ENCODE measurements at regions of chr2 and their contacts with region 1.

Region 1: DNA sequence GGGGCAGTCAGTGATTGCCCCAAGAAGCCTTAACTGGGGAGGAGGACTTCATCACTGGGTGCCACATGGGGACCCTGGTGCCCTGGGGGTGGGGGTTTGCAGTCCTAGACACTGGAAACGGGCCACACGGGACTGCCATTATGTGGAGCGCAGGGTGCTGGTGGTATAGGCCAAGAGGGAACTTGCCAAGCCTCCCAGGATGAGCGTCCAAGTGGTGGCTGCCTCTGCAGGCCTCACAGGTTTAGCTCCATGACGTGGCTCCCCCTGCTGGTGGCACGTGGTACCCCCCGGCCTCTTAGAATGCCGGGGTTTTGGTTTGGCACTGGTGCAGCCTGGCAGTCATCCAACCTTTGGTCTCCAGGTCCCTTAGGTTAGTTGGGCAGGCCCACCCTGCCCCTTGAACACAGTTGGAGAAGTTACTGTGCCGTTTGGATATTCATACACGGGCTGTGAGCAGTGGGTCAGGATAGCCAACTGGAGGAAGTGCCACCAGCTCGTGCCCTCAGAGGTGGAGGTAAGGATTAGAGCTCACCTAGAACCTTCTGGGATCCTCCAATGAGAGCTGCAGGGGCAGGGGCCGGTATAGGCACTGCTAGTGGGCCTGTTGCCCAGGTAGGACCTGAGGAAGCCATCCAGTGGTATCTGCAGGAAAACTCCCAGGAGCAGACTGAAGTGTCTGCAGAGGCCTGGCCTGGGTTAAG is 5.6 kb downstream of the PTMA start:
- H3K4me3 ChIP-seq: no peak overlapping the region
- H3K27ac ChIP-seq: peak overlapping the region; percentile 32
- H3K4me1 ChIP-seq: peaks cover 10% of the 10 kb centered on the region
- CTCF ChIP-seq: peak; percentile 98

Region 2: GRCh38 chr2:231612179-231613053 is 101.5 kb before region 1 on chr2:
- CTCF ChIA-PET with region 1: interaction called, 102 read pairs
- POLR2A ChIA-PET with region 1: interaction called, 6 read pairs
- H3K4me3 ChIP-seq: no peak overlapping the region
- H3K27ac ChIP-seq: no peak overlapping the region
- H3K4me1 ChIP-seq: no peaks in the 10 kb centered on the region; the same call in 1 of the 2 replicates
- CTCF ChIP-seq: peak; percentile 93

Region 3: DNA sequence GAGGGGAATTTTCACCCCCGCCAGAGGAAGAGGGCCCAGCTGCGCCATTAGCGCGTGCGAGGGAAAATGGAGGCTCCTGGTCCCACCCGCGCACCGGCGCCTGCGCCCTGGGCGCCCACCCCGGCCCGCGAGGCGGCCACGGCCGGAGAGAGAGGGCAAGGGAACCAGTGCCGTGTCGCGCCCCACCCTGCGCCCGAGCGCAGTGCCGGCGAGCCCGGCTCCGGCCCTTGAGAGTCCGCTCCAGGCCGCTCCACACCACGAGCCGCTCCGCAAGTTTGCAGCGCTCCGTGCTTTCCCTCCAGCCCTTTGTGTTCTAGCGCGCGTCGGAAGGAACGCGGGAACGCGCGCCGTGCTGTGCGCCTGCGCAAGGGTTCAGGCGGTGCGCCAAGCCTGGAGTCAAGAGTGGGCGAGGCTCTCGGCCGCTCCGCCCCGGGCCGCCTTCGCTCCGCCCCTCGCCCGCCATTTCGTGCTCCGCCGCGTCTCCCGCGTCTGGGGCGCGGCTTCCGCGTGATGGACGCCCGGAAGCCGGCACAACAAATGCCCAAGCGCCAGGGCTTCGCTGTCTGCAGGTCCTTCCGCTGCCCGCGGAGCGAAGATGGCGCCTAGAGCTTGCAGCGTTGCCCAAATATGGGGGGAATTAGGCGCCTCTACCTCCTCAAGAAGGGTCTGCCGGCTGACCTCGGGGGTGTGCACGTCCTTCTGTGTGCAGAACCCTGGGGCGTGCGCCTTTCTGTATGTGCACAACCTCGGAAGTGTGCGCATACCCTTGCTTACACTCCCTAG is 51.7 kb before region 1 on chr2:
- CTCF ChIA-PET with region 1: interaction called, 11 read pairs
- POLR2A ChIA-PET with region 1: interaction called, 31 read pairs
- H3K4me3 ChIP-seq: no peak overlapping the region
- H3K27ac ChIP-seq: peak overlapping the region; percentile 13; the same call in 1 of the 2 replicates
- H3K4me1 ChIP-seq: 0 out of 2 replicates have a peak, but pooled peaks cover 3% of the 10 kb centered on the region
- CTCF ChIP-seq: no peak

Region 4: DNA sequence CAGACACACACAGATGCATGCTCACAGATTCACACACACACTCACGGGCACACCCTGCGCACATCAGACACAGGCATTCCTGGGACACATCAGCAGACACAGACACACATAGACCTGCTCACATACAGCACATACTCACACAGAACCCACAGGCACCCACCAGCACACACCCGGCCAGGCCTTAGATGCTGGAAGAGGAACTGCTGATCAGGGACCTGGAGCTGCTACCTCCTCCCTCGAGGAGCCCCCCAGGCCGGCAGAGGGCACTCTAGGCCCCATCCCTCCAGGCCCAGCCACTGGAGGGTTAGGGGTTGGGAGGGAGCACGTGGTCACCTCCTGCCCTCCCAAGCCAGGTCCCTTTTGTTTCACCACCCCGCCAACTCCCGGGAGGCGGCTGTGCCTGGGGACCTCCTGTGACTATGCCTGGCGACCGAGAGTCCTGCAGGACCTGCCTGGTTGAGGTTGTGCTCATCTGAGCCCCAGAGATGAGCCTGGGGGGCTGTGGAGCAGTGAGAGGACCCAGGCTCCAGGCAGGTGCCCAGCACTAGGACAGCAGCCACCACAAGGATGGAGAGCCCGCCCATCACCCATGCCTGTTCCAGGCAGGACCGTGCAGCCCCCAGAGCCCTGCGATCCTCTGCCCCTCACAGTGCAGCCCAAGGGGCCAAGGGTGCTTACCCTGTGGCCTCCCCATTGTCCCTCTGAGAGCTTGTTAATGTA is 26.6 kb before region 1 on chr2:
- CTCF ChIA-PET with region 1: interaction called, 85 read pairs
- POLR2A ChIA-PET with region 1: interaction called, 41 read pairs
- H3K4me3 ChIP-seq: no peak overlapping the region
- H3K27ac ChIP-seq: peak overlapping the region; percentile 2; the same call in 1 of the 2 replicates
- H3K4me1 ChIP-seq: no peaks in the 10 kb centered on the region
- CTCF ChIP-seq: peak; percentile 95

Region 5: DNA sequence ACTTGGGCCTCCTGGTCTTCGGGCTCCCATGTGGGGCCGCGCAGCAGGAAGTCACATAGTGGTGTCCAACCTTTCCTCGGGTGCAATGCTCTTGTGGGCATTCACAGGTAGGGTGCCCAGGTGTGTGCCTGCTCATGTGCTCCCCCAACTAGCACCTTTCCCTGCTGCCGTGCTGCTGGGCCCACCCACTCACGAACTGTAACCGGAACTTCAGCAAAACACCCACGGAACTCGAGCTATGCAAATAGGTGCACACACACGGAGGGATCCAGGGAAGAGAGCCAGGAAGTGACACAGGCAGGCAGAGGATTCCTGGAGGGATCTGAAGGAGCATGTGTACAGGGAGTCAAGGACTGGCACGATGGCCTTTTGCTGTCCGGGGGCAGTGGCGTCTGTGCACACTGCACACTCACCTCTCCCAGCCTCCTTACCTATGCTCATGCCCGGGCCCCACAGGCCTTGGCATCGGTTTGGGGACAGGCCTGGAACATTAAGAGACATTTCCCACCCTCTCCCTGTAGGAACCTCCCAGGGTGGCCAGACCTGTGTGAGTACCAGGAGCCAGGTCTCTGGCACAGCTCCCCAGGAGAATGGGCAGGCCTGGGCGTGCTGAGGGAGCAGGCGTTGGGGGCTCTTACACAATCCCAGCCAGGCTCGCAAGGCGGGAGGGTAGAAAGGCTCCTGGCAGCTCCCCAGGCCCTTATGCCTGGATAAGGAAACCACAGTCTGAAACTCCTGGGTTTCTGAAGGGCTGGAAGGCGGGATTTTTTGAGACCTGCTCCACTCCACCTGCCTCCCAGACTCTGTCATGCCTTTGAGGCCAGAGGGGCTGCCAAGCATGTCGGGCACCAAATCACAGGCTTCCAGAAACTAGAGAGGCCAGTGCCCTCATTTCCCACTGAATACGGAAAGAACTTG is 12.2 kb before region 1 on chr2:
- CTCF ChIA-PET with region 1: interaction called, 14 read pairs
- POLR2A ChIA-PET with region 1: interaction called, 13 read pairs
- H3K4me3 ChIP-seq: no peak overlapping the region
- H3K27ac ChIP-seq: peak overlapping the region; percentile 35; the same call in 1 of the 2 replicates
- H3K4me1 ChIP-seq: no peaks in the 10 kb centered on the region; the same call in 1 of the 2 replicates
- CTCF ChIP-seq: no peak

Region 6: DNA sequence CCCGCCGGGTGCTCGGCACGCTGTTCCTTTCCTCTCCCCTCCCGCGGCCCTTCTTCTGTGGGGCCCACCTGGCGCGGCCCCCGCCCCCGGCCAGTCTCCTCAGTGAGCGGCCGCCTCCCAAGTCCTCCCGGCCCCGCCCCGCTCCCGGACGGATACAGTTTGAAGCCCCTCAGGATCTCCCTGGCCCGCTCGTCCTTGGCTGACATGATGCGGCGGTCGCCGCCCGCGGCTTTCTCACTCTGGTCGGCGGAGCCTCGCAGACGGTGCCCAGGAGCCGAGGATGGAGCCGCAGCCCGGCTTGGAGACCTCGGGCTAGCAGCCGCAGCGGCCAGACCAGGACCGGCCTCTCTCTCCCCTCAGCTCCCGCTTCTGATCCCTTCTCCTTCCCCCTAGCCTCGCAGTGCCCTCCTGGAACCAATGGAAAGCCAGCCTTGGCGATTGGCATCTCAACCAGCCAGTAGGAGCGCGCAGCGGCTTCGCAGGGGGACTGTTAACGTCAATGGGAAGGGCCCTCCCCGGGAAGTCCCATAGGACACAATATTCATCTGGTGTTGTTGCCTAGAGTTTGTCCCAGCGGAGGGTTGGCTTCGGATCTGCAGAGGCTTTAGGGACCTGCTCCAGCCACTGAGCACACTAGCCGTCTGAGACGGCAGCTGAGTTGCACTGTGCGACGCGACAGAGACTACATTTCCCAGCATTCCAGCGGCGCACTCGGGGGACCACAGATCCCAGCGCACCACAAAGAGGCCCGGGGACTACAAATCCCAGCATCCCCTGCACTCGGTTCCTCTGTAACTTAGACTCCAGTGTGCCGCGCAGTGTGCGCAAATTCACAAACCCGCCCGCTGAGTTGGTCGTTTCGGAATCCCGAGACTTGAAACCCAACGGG is 67.3 kb after region 1 on chr2 and contains the start of gene PDE6D:
- CTCF ChIA-PET with region 1: interaction called, 20 read pairs
- POLR2A ChIA-PET with region 1: interaction called, 5 read pairs
- H3K4me3 ChIP-seq: peak within 1 kb of the TSS; percentile 75
- H3K27ac ChIP-seq: peak within 1 kb of the TSS; percentile 58; the same call in 1 of the 2 replicates
- H3K4me1 ChIP-seq: peaks cover 3% of the 10 kb centered on the region; the same call in 1 of the 2 replicates
- CTCF ChIP-seq: no peak

Region 7: DNA sequence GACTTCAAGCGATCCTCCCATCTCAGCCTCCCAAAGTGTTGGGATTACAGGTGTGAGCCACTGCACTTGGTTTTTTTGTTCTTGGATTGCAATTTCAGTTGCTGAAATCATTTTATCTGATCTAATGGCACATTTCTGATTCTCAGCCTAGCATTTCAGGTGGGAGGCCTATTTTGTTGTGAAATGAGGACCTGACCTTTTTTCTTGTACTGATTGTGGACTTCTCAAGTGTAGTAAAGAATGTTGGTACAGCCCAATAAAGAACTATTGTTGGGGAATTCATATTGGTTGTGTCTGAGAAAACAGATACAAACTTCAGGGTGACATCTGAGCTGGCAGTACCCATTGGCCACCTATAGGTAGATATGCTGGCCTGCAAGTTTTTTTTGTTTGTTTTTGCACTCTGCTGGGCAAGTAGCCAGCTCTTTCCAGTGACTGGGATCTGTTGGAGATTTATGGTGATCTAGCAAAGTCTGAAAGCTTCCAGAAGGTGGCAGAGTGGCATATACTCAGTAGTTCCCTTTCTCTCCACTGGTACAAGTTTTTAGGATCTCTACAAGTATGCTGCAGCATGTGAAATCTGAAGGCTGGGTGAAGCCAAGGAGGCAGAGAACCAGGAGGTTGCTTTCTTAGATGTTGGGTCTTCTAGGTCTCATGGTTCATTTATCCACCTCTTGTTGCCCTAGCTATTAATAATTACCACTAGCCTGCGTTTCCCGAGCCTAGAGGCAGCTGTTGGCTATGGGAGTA is 81.6 kb after region 1 on chr2:
- CTCF ChIA-PET with region 1: interaction called, 14 read pairs
- POLR2A ChIA-PET with region 1: interaction called, 3 read pairs
- H3K4me3 ChIP-seq: no peak overlapping the region
- H3K27ac ChIP-seq: no peak overlapping the region
- H3K4me1 ChIP-seq: 0 out of 2 replicates have a peak, but pooled peaks cover 3% of the 10 kb centered on the region
- CTCF ChIP-seq: peak; percentile 94

Measured in HEK293 (cell line).